K562 (cell line): ENCODE measurements at regions of chr6 and their contacts with region 1.

Region 1: DNA sequence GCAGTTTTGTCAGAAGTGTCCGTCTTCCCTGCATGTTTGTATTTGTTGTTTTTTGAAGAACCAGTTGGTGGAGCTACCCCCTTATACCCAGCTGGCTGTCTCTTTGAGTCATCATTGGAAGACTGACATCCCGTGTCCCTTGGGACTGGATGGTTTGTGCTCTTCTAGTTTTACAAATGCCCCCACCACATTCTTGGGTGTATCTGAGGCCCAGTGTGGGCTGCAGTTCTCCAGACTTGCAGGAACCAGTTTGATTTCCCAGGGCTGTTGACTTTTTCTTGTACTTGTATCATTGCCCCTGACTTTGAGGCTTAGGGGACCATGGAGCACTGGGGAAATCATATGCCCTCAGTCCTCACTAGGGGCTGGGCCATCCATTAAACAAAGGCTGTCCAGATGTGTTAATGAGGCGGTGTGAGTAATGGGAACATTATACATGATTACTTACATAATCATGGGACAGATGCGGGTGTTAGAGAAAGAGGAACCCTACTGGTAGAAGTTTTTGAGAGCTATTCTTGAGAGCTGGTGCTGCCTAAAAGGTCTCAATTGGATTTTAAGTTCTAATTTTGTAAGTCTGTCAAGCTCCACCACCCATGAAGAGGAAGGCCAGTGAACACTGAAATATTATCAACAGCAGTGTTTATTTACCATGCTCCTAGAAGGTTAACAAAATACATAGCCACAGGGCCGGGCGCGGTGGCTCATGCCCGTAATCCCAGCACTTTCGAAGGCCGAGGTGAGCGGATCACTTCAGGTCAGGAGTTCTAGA is 8.4 kb downstream of the JARID2 start:
- DNase-seq: peak in 2 of 4 experiments; percentile 58 to 66
- ATAC-seq: peak; percentile 39
- H3K4me3 ChIP-seq: no peak overlapping the region
- H3K27ac ChIP-seq: no peak overlapping the region
- H3K4me1 ChIP-seq: peaks cover 16 to 54% of the 10 kb centered on the region in 2 experiments
- H3K27me3 ChIP-seq: no peaks in the 10 kb centered on the region
- CTCF ChIP-seq: peak; percentile 41 to 68 (median 53); a peak in 4 of 6 replicates
- EP300 ChIP-seq: 0 out of 2 replicates have a peak, but pooled peaks have one; percentile 3
- POLR2A ChIP-seq: no peak
- RAD21 ChIP-seq: peak; percentile 63 to 90

Region 2: GRCh38 chr6:15264902-15265761 is 10.9 kb after region 1 on chr6:
- CTCF ChIA-PET with region 1: no interaction called
- POLR2A ChIA-PET with region 1: interaction called, 24 read pairs
- in situ Hi-C with region 1: no loop called
- intact Hi-C with region 1: loop called (anchors 2 kb)
- DNase-seq: peak; percentile 51 to 63 (median 56)
- ATAC-seq: peak; percentile 31
- H3K4me3 ChIP-seq: no peak overlapping the region
- H3K27ac ChIP-seq: peak overlapping the region; percentile 56; the same call in 1 of the 3 replicates
- H3K4me1 ChIP-seq: peaks cover 39 to 70% of the 10 kb centered on the region in 2 experiments
- H3K27me3 ChIP-seq: no peaks in the 10 kb centered on the region
- CTCF ChIP-seq: no peak
- EP300 ChIP-seq: no peak
- POLR2A ChIP-seq: no peak
- RAD21 ChIP-seq: 0 out of 4 replicates have a peak, but pooled peaks of 1 of the 2 experiments have one; percentile 4

Region 3: GRCh38 chr6:15299430-15300131 is 45.3 kb after region 1 on chr6:
- CTCF ChIA-PET with region 1: no interaction called
- POLR2A ChIA-PET with region 1: no interaction called
- in situ Hi-C with region 1: no loop called
- intact Hi-C with region 1: loop called (anchors 2 kb)
- DNase-seq: peak; percentile 91 to 98 (median 94)
- ATAC-seq: peak; percentile 86
- H3K4me3 ChIP-seq: peak overlapping the region; percentile 0; the same call in 1 of the 2 replicates
- H3K27ac ChIP-seq: peak overlapping the region; percentile 89
- H3K4me1 ChIP-seq: peaks cover 37 to 77% of the 10 kb centered on the region in 2 experiments
- H3K27me3 ChIP-seq: no peaks in the 10 kb centered on the region
- CTCF ChIP-seq: peak in 1 of 3 experiments; percentile 18; a peak in 1 of 6 replicates
- EP300 ChIP-seq: peak; percentile 98
- POLR2A ChIP-seq: peak; percentile 69
- RAD21 ChIP-seq: peak in 1 of 2 experiments; percentile 35; a peak in 2 of 4 replicates

Region 4: GRCh38 chr6:15327271-15327670 is 73.0 kb after region 1 on chr6:
- CTCF ChIA-PET with region 1: no interaction called
- POLR2A ChIA-PET with region 1: no interaction called
- in situ Hi-C with region 1: no loop called
- intact Hi-C with region 1: no loop called
- DNase-seq: peak; percentile 57 to 78 (median 70)
- ATAC-seq: peak; percentile 88
- H3K4me3 ChIP-seq: no peak overlapping the region
- H3K27ac ChIP-seq: no peak overlapping the region
- H3K4me1 ChIP-seq: peaks cover 12 to 33% of the 10 kb centered on the region in 2 experiments
- H3K27me3 ChIP-seq: no peaks in the 10 kb centered on the region
- CTCF ChIP-seq: peak; percentile 44 to 65 (median 56); a peak in 5 of 6 replicates
- EP300 ChIP-seq: peak; percentile 21; the same call in 1 of the 2 replicates
- POLR2A ChIP-seq: no peak
- RAD21 ChIP-seq: peak; percentile 58 to 74

Region 5: GRCh38 chr6:15340775-15341174 is 86.5 kb after region 1 on chr6:
- CTCF ChIA-PET with region 1: no interaction called
- POLR2A ChIA-PET with region 1: no interaction called
- in situ Hi-C with region 1: no loop called
- intact Hi-C with region 1: loop called (anchors 5 kb)
- DNase-seq: no peak
- ATAC-seq: 0 out of 3 replicates have a peak, but pooled peaks have one; percentile 7
- H3K4me3 ChIP-seq: no peak overlapping the region
- H3K27ac ChIP-seq: peak overlapping the region; percentile 10; the same call in 2 of the 3 replicates
- H3K4me1 ChIP-seq: peaks cover 27 to 64% of the 10 kb centered on the region in 2 experiments
- H3K27me3 ChIP-seq: no peaks in the 10 kb centered on the region
- CTCF ChIP-seq: no peak; a peak in 1 of 6 replicates
- EP300 ChIP-seq: no peak
- POLR2A ChIP-seq: no peak
- RAD21 ChIP-seq: no peak

Region 6: GRCh38 chr6:15389765-15390723 is 135.8 kb after region 1 on chr6:
- CTCF ChIA-PET with region 1: no interaction called
- POLR2A ChIA-PET with region 1: interaction called, 4 read pairs
- in situ Hi-C with region 1: no loop called
- intact Hi-C with region 1: loop called (anchors 1 kb)
- DNase-seq: peak; percentile 46 to 76 (median 61)
- ATAC-seq: peak; percentile 83
- H3K4me3 ChIP-seq: no peak overlapping the region
- H3K27ac ChIP-seq: no peak overlapping the region; the same call in 2 of the 3 replicates
- H3K4me1 ChIP-seq: peaks cover 15 to 43% of the 10 kb centered on the region in 2 experiments; a peak in 4 of 5 replicates
- H3K27me3 ChIP-seq: no peaks in the 10 kb centered on the region
- CTCF ChIP-seq: peak; percentile 80 to 90 (median 81)
- EP300 ChIP-seq: no peak
- POLR2A ChIP-seq: no peak
- RAD21 ChIP-seq: peak; percentile 76 to 96

Region 7: DNA sequence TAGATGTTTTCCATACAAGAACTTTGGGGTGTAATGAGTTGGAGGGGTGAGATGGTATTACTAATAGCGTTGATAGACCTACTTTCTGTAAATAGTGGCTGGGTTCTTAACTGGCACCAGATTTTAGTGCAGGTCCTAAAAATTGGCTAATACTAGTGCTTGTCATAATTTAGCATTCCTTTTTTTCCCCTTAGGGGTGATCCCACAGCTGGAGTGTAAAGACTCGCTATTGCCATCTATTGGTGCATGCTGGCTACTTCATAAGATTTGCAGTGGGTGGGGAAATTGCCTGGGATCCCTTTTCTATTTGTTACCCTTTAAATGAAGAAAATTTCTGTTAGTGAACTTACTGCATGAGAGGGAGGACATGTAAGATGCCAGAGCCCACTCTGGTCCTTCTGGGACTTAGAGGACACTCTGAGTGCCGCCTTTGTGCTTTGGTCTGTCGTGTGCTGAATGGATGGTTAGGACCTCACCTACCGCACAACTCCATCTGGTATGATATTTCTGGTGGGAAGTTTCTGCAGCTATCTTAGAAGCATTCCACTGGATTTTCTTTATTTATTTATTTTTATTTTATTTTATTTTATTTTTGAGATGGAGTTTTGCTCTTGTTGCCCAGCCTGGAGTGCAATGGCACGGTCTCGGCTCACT is 187.1 kb after region 1 on chr6:
- CTCF ChIA-PET with region 1: no interaction called
- POLR2A ChIA-PET with region 1: interaction called, 3 read pairs
- in situ Hi-C with region 1: no loop called
- intact Hi-C with region 1: loop called (anchors 2 kb)
- DNase-seq: peak; percentile 50 to 82 (median 66)
- ATAC-seq: peak; percentile 85
- H3K4me3 ChIP-seq: no peak overlapping the region
- H3K27ac ChIP-seq: no peak overlapping the region
- H3K4me1 ChIP-seq: peaks cover 5 to 24% of the 10 kb centered on the region in 2 experiments
- H3K27me3 ChIP-seq: no peaks in the 10 kb centered on the region
- CTCF ChIP-seq: peak; percentile 79 to 88 (median 87)
- EP300 ChIP-seq: no peak
- POLR2A ChIP-seq: no peak
- RAD21 ChIP-seq: peak; percentile 83 to 88

Region 8: DNA sequence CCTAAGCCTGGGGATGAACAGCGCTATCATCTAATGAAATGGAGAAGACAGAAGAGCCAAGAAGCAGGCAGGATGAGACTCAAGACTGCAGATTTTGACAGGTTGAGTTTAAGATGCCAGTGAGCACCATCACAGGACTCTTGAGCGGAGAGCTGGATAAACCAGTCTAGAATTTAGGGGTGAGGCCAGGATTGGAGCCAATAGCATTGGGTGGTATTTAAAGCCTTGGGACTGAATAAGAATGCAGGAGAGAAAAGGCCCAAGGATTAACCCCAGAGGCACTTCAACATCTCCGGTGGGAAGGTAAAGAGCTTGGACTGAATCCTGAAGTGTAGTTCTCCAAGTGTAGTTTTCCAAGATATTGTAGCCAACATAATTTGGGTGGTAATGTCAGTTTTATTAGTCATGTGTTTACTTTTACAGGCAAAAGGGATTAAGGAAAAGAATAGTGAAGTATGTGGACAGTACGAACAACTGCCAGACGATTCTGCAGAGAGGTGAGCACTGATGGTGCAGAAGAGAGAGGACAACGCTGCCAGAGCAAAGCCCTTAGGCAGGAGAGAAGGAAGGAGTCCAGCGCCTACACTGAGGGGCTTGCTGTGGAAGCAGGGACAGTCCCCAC is 323.4 kb after region 1 on chr6:
- CTCF ChIA-PET with region 1: no interaction called
- POLR2A ChIA-PET with region 1: no interaction called
- in situ Hi-C with region 1: no loop called
- intact Hi-C with region 1: no loop called
- DNase-seq: no peak
- ATAC-seq: no peak
- H3K4me3 ChIP-seq: no peak overlapping the region
- H3K27ac ChIP-seq: no peak overlapping the region
- H3K4me1 ChIP-seq: peaks cover 3 to 27% of the 10 kb centered on the region in 2 experiments; a peak in 4 of 5 replicates
- H3K27me3 ChIP-seq: no peaks in the 10 kb centered on the region
- CTCF ChIP-seq: no peak
- EP300 ChIP-seq: no peak
- POLR2A ChIP-seq: no peak
- RAD21 ChIP-seq: no peak

Region 9: GRCh38 chr6:16206595-16207037 is 952.4 kb after region 1 on chr6:
- CTCF ChIA-PET with region 1: no interaction called
- POLR2A ChIA-PET with region 1: no interaction called
- in situ Hi-C with region 1: no loop called
- intact Hi-C with region 1: loop called (anchors 10 kb)
- DNase-seq: peak; percentile 79 to 84 (median 79)
- ATAC-seq: peak; percentile 88
- H3K4me3 ChIP-seq: no peak overlapping the region
- H3K27ac ChIP-seq: no peak overlapping the region; the same call in 1 of the 3 replicates
- H3K4me1 ChIP-seq: peaks cover 8 to 14% of the 10 kb centered on the region in 2 experiments; a peak in 4 of 5 replicates
- H3K27me3 ChIP-seq: no peaks in the 10 kb centered on the region
- CTCF ChIP-seq: peak; percentile 88 to 98 (median 96)
- EP300 ChIP-seq: no peak; the same call in 1 of the 2 replicates
- POLR2A ChIP-seq: no peak
- RAD21 ChIP-seq: peak; percentile 97